Prostate gland (tissue), 2 donors: ENCODE measurements at regions of chr2 and their contacts with region 1.

Region 1: GRCh38 chr2:190408538-190409271 is 550 bp downstream of the MFSD6 start:
- DNase-seq: peak; percentile 65
- H3K4me3 ChIP-seq: peak overlapping the region; percentile 82 to 89
- H3K27ac ChIP-seq: peak overlapping the region; percentile 92
- H3K4me1 ChIP-seq: peaks cover 4% of the 10 kb centered on the region
- H3K27me3 ChIP-seq: no peaks in the 10 kb centered on the region
- CTCF ChIP-seq: no peak
- POLR2A ChIP-seq: peak; percentile 68

Region 2: GRCh38 chr2:190468814-190469569 is 60.3 kb after region 1 on chr2:
- intact Hi-C with region 1: loop called (anchors 5 kb)
- DNase-seq: peak; percentile 81
- H3K4me3 ChIP-seq: no peak overlapping the region
- H3K27ac ChIP-seq: peak overlapping the region; percentile 52 to 69
- H3K4me1 ChIP-seq: peaks cover 12% of the 10 kb centered on the region
- H3K27me3 ChIP-seq: no peaks in the 10 kb centered on the region
- CTCF ChIP-seq: no peak
- POLR2A ChIP-seq: no peak